CD8-positive, alpha-beta T cell (primary cell): ENCODE measurements at regions of chr6 and their contacts with region 1.

Region 1: DNA sequence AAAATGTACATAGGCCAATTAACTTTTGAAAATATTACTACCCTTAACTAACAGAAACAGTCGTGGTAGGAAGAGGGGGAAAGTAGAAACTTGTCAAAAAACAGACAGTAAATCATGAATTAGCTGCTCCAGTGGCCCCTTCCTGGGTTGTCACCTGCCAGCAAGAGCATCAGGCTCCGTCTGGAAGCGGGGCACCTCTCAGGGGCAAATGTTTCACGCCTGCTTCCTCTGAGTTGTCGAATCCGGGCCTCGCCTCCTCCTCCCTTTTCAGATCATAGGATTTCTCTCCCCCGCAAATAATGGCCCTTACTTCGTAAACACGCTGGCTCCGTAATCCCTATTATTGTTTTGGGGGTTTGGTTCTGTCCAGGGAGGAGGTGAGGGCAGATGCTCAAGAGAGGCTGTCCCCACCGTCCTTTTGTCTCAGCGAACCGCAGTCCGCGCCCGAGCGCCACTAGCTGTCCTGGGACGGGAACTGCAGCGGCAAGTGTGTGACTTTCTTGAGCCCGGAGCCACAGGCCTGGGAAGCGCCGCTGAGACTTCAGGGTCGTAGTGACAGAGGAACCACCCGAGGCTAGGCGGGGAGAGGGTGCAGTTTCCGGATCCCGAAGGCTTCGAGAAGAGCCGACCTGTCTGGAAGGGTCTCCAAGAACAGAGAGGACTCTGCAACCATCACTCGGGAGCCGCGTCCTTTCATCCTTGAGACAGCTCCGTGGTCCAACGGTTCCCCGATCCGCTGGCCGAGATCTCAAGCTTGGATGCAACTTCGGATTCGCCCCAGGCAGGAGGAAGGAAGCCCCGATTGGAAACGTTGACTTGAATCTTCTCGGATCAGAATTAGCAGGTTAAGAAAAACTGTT is 214.5 kb upstream of the ZNF184 start:
- DNase-seq: peak; percentile 58 to 88 (median 74)
- ATAC-seq: peak; percentile 72
- H3K4me3 ChIP-seq: peak overlapping the region; percentile 60 to 74
- H3K4me3 Mint-ChIP-seq: peak overlapping the region; percentile 94
- H3K27ac ChIP-seq: peak overlapping the region; percentile 15 to 55
- H3K27ac Mint-ChIP-seq: peak overlapping the region; percentile 93
- H3K4me1 ChIP-seq: peaks cover 3% of the 10 kb centered on the region
- H3K4me1 Mint-ChIP-seq: peaks cover 18% of the 10 kb centered on the region
- H3K27me3 ChIP-seq: no peaks in the 10 kb centered on the region
- H3K27me3 Mint-ChIP-seq: peaks cover 6% of the 10 kb centered on the region
- CTCF ChIP-seq: peak; percentile 67

Region 2: DNA sequence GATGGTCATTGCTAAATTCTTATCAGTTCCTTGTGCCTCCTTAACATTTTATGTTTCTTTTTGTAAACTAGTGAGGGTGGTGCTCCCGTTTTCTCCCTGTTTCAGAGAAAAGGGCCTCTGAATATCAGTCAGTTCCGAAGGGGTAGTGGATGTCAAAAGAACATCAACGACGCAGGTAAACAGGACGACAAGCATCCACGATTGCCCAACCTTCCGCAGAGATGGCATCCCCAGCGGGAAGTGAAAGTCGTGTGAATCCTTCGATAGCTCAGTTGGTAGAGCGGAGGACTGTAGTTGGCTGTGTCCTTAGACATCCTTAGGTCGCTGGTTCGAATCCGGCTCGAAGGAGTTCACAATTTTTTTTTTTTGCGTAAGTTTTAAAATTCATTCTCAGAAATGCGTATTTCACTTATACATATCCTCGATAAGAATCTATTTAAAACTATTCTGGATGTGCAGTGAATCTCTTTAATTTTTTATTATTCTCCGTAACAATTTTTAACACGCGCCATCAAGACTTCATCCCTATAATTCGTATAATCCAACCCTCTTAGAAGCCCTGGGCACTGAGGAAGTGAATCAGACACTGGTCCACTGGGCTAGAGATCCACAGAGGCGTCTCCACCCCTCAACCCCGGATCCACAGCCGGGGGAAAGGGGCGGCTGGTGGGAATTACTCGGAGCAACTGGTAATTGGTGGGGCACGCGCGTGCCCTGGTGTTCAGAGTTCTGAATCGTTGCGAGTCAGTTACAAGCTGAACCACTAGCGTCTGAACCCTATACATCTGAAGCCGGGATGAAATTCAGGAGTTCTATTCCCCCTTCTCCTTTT is 1118.6 kb before region 1 on chr6:
- CTCF ChIA-PET with region 1: no interaction called
- POLR2A ChIA-PET with region 1: no interaction called
- intact Hi-C with region 1: loop called in 1 of 2 experiments (anchors 5 kb)
- DNase-seq: peak; percentile 95 to 100 (median 99)
- ATAC-seq: peak; percentile 73
- H3K4me3 ChIP-seq: peak overlapping the region; percentile 74 to 90
- H3K4me3 Mint-ChIP-seq: peak overlapping the region; percentile 92
- H3K27ac ChIP-seq: peak overlapping the region; percentile 79 to 80
- H3K27ac Mint-ChIP-seq: peak overlapping the region; percentile 97
- H3K4me1 ChIP-seq: peaks cover 15% of the 10 kb centered on the region
- H3K4me1 Mint-ChIP-seq: peaks cover 20% of the 10 kb centered on the region
- H3K27me3 ChIP-seq: no peaks in the 10 kb centered on the region
- H3K27me3 Mint-ChIP-seq: peaks cover 2% of the 10 kb centered on the region
- CTCF ChIP-seq: peak; percentile 34

Region 3: DNA sequence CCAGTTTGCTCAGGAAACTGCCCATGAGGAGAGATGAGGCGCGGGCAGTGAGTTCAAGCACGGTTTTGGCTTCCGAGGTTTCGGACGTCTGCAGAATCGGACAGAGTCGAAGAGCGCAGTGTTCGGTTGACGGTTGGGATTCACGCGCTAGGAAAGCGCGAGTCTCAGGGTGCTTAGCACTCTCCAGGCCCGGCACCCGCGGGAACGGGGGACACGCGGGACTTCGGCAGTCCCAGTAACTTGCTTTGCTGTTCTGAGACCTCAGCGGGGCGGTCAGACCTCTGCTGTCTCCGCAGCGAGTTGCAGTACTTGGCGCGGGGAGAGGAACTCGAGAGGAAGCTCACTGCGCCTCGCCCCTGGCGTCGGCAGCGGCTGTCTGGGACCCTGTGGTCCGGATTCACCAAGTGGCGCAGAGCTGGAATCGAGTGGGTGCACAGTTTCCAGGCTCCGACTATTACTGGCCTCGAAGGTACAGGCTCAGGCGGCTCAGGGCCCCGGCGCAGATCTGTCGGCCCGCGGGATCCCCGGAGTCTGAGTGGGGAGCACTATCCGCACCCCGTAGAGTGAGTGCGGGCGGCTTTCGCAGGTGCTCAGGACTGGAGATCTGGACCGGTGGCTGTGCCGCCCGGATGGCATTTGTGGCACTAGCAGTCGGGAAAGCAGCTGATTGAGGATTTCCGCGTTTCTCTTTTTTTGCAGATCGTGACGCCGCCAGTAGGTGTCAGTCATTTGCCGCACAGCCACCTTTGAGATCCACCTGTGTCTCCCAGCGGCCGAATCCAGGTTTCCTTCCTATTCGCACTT is 375.0 kb before region 1 on chr6 and contains the start of gene POM121L2:
- CTCF ChIA-PET with region 1: no interaction called
- POLR2A ChIA-PET with region 1: no interaction called
- intact Hi-C with region 1: loop called in 1 of 2 experiments (anchors 5 kb)
- DNase-seq: peak; percentile 28 to 79 (median 52)
- ATAC-seq: peak; percentile 65
- H3K4me3 ChIP-seq: peak within 1 kb of the TSS; percentile 71 to 80
- H3K4me3 Mint-ChIP-seq: peak within 1 kb of the TSS; percentile 81
- H3K27ac ChIP-seq: no peak within 1 kb of the TSS
- H3K27ac Mint-ChIP-seq: no peak within 1 kb of the TSS
- H3K4me1 ChIP-seq: peaks cover 12% of the 10 kb centered on the region
- H3K4me1 Mint-ChIP-seq: peaks cover 10% of the 10 kb centered on the region
- H3K27me3 ChIP-seq: peaks cover 10 to 12% of the 10 kb centered on the region in 2 experiments
- H3K27me3 Mint-ChIP-seq: peaks cover 72% of the 10 kb centered on the region
- CTCF ChIP-seq: peak; percentile 79
- total RNA-seq, gene POM121L2: not detected

Region 4: DNA sequence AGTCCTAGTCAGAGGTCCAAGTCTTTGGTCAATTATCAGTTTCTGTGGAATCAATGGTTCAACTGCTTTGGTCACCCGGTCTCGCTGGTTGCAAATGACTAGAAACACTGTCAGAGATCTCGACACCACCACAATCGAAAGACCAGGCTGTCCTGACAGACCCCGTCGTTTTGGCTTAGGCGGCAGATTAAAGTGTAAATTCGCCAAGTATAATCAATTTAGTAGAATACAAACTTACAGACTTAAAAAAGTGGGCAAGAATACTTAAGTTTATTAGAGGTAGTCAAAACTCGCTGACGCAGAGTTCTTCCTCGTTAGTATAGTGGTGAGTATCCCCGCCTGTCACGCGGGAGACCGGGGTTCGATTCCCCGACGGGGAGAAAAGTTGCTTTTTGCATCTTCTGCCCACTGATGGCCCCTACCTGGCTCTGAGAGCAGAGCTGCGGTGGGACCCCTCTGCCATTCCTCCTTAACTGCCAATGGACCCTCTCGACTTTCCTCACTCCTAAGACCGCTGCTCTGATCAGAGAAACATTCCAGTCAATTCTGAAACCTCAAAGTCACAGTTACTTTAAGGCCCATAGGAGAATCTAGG is 183.9 kb before region 1 on chr6:
- CTCF ChIA-PET with region 1: interaction called, 3 read pairs
- POLR2A ChIA-PET with region 1: no interaction called
- intact Hi-C with region 1: loop called (anchors 2 to 5 kb)
- DNase-seq: peak; percentile 58 to 90 (median 79)
- ATAC-seq: peak; percentile 62
- H3K4me3 ChIP-seq: peak overlapping the region; percentile 61 to 70
- H3K4me3 Mint-ChIP-seq: peak overlapping the region; percentile 94
- H3K27ac ChIP-seq: peak overlapping the region; percentile 34 to 46
- H3K27ac Mint-ChIP-seq: peak overlapping the region; percentile 90
- H3K4me1 ChIP-seq: peaks cover 11% of the 10 kb centered on the region
- H3K4me1 Mint-ChIP-seq: peaks cover 38% of the 10 kb centered on the region
- H3K27me3 ChIP-seq: peaks cover 0 to 7% of the 10 kb centered on the region in 2 experiments
- H3K27me3 Mint-ChIP-seq: peaks cover 4% of the 10 kb centered on the region
- CTCF ChIP-seq: no peak

Region 5: DNA sequence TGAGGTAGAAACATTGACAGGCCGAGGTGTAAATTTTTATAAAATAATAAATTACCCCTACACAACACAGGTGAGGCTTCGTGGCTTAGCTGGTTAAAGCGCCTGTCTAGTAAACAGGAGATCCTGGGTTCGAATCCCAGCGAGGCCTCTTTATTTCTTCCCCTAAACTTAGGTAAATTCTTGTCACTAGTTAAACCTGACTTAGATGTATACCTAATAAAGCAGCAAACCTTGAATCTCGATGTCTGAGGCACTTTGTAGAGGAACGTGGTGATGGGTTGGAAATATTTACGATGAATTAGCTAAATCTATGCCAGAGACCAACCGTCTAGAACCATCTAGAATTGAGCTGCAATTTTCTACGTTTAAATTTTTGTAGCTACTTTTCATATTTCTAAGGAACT is 39.2 kb after region 1 on chr6:
- CTCF ChIA-PET with region 1: no interaction called
- POLR2A ChIA-PET with region 1: no interaction called
- intact Hi-C with region 1: no loop called
- DNase-seq: no peak
- ATAC-seq: no peak
- H3K4me3 ChIP-seq: no peak overlapping the region
- H3K4me3 Mint-ChIP-seq: no peak overlapping the region
- H3K27ac ChIP-seq: no peak overlapping the region
- H3K27ac Mint-ChIP-seq: no peak overlapping the region
- H3K4me1 ChIP-seq: no peaks in the 10 kb centered on the region
- H3K4me1 Mint-ChIP-seq: no peaks in the 10 kb centered on the region
- H3K27me3 ChIP-seq: peaks cover 0 to 6% of the 10 kb centered on the region in 2 experiments
- H3K27me3 Mint-ChIP-seq: peaks cover 56% of the 10 kb centered on the region
- CTCF ChIP-seq: no peak

Region 6: GRCh38 chr6:27809939-27810767 is 122.8 kb after region 1 on chr6:
- CTCF ChIA-PET with region 1: no interaction called
- POLR2A ChIA-PET with region 1: no interaction called
- intact Hi-C with region 1: loop called in 1 of 2 experiments (anchors 5 kb)
- DNase-seq: peak; percentile 63 to 96 (median 74)
- ATAC-seq: peak; percentile 60
- H3K4me3 ChIP-seq: peak overlapping the region; percentile 52 to 65
- H3K4me3 Mint-ChIP-seq: peak overlapping the region; percentile 95
- H3K27ac ChIP-seq: peak overlapping the region; percentile 83 to 87
- H3K27ac Mint-ChIP-seq: peak overlapping the region; percentile 99
- H3K4me1 ChIP-seq: peaks cover 36% of the 10 kb centered on the region
- H3K4me1 Mint-ChIP-seq: peaks cover 57% of the 10 kb centered on the region
- H3K27me3 ChIP-seq: no peaks in the 10 kb centered on the region
- H3K27me3 Mint-ChIP-seq: no peaks in the 10 kb centered on the region
- CTCF ChIP-seq: no peak

Region 7: DNA sequence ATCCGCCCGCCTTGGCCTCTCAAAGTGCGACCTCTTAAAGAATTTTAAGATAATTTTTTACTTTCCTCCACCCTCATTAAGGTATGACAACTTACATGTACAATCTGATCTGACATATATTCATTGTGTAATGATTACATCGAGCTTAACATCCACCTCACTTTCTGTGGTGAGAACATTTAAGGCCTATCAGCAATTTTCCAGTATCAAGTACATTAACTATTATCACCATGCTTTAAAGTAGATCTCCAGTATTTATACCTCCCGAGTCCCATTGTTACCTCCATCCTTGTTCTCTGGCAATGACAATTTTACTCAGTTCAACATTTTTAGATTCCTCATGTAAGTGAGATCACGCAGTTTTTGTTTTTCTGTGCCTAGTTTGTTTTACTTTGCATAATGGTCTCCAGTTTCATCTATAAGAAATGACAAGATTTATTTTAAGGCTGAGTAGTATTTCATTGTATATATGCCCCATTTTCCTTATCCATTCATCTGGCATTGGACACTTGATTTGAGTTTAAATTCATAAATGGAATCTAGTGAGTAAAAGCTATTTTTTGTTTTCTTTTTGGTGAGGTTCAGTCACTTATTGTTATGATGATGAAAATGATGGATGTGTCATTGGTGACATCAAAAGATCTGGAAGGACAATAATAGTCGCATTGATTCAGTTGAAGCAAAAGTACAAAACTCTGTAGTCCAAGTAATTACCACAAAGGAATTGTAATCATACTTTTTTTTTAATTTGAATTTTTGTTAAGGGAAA is 137.8 kb after region 1 on chr6:
- CTCF ChIA-PET with region 1: no interaction called
- POLR2A ChIA-PET with region 1: no interaction called
- intact Hi-C with region 1: no loop called
- DNase-seq: peak in 1 of 9 experiments; percentile 45
- ATAC-seq: peak; percentile 6
- H3K4me3 ChIP-seq: peak overlapping the region; percentile 55 to 76
- H3K4me3 Mint-ChIP-seq: peak overlapping the region; percentile 89
- H3K27ac ChIP-seq: peak overlapping the region; percentile 81 to 91
- H3K27ac Mint-ChIP-seq: peak overlapping the region; percentile 99
- H3K4me1 ChIP-seq: peaks cover 24% of the 10 kb centered on the region
- H3K4me1 Mint-ChIP-seq: peaks cover 32% of the 10 kb centered on the region
- H3K27me3 ChIP-seq: no peaks in the 10 kb centered on the region
- H3K27me3 Mint-ChIP-seq: no peaks in the 10 kb centered on the region
- CTCF ChIP-seq: no peak